Calu3 (cell line): ENCODE measurements at regions of chr6 and their contacts with region 1.

Region 1: DNA sequence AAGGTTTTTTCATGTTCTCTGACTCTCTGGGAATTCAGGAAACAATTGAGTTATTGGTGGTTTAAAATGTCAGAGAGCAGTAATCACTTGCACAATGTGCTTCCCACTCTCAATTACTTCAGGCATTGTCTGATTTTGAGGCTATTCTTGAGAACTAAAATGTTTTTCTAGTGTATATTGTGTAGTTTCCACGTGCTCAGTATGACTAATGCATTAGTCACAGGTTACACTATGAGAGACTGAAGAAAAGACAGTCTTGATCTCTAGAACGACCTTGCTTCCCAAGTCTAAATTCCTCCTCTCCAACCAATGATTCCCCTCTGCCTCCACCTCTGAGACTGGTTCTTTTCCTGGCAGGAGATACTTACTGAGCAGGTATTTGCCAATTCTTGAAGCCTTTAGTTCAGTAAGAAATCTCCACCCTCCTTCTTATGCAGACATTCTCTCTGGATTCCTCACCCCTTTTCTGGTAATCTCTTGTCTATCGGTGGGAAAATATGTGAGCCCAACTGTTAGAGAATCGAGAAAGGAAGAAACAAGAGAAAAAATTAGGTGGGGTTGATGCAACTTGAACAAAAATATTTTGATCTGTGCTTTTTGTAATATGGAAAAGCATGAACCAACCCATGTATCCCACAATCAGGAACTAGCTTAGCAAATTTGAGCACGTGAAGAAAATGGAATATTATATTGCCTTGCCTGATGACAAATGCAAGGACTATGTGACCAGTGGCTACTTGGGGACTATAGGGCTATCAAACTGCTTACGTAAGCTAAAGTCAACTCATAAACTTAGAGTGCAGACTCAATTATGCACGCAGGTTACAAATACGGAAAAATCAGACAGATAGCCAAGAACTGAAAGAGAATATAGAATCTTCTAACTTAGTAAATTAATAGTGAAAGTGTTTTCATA is 61.1 kb upstream of the SLC22A16 start:
- DNase-seq: peak; percentile 47
- H3K4me3 Mint-ChIP-seq: peak overlapping the region; percentile 15
- H3K27ac Mint-ChIP-seq: peak overlapping the region; percentile 78
- H3K4me1 Mint-ChIP-seq: peaks cover 68% of the 10 kb centered on the region
- H3K27me3 Mint-ChIP-seq: no peaks in the 10 kb centered on the region
- CTCF ChIP-seq: no peak

Region 2: DNA sequence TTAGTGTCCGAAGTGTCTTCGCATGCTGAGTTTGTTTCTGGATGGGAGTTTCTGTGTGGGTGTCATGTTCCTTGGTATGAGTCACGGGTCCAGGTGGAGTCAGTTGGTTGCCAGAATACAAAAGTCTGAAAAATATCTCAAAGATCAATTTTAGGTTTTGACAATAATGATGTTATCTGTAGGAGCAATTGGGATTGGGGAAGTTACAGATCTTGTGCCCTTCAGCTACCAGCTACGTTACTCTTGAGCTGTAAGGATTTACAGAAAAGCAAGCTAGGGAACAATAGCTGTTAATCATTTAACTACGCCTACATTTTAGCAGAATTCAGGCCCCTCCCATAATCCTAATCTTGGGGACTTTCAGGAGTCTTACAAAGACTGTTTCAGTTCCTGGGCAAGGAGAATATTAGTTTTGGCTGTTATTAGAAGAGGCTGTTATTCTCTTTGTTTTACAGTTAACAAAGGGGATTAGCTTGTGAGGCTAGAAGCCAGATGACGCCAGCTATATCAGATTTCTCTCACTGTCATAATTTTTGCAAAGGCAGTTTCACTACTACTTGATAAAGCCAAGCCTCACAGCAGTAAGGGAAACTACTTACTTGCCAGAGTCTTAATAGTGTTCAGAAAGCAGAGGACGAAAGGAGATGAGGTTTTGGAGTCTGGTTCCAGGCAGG is 45.7 kb before region 1 on chr6:
- CTCF ChIA-PET with region 1: no interaction called
- intact Hi-C with region 1: no loop called
- DNase-seq: peak; percentile 52
- H3K4me3 Mint-ChIP-seq: peak overlapping the region; percentile 52
- H3K27ac Mint-ChIP-seq: peak overlapping the region; percentile 88
- H3K4me1 Mint-ChIP-seq: peaks cover 55% of the 10 kb centered on the region
- H3K27me3 Mint-ChIP-seq: no peaks in the 10 kb centered on the region
- CTCF ChIP-seq: no peak

Region 3: GRCh38 chr6:110656492-110656891 is 119.0 kb after region 1 on chr6:
- CTCF ChIA-PET with region 1: interaction called, 3 read pairs
- intact Hi-C with region 1: loop called (anchors 5 kb)
- DNase-seq: peak; percentile 39
- H3K4me3 Mint-ChIP-seq: no peak overlapping the region
- H3K27ac Mint-ChIP-seq: peak overlapping the region; percentile 50
- H3K4me1 Mint-ChIP-seq: peaks cover 25% of the 10 kb centered on the region
- H3K27me3 Mint-ChIP-seq: no peaks in the 10 kb centered on the region
- CTCF ChIP-seq: no peak

Region 4: GRCh38 chr6:110882271-110882613 is 344.8 kb after region 1 on chr6:
- CTCF ChIA-PET with region 1: no interaction called
- intact Hi-C with region 1: loop called (anchors 5 kb)
- DNase-seq: no peak
- H3K4me3 Mint-ChIP-seq: peak overlapping the region; percentile 14
- H3K27ac Mint-ChIP-seq: peak overlapping the region; percentile 20
- H3K4me1 Mint-ChIP-seq: peaks cover 62% of the 10 kb centered on the region
- H3K27me3 Mint-ChIP-seq: no peaks in the 10 kb centered on the region
- CTCF ChIP-seq: no peak